Activated B cell treated with CpG ODN at 0.5 μM for 24 hours (primary cell): ENCODE measurements at regions of chr1 and their contacts with region 1.

Region 1: DNA sequence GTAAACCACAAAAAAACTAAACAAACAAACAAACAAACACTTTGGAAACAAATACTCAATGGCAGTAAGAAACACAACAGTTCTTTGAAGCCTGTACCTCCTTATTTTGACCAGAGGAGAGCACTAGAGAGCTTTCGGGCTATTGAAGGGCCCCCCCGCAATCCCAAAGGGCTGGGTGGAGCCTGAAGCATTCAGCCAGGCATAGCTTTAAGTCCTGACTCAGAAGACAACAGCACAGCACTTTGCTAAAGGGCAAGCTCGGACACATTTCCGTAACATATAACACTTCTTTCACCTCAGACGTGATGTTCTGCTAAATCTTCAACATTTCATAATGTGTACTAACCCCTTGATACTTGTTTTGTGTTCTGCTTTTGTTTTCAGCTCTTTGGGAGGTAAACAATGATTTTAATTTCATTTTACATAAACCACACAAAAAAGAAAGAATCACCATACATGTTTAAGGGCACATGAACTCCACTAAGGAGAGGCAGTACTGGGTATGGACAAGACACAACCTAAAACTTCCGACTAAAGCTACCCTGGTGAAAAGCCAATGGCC is 9.7 kb upstream of the SHCBP1L start:
- DNase-seq: no peak
- ATAC-seq: peak; percentile 100
- H3K4me3 Mint-ChIP-seq: peak overlapping the region; percentile 67
- H3K27ac Mint-ChIP-seq: peak overlapping the region; percentile 76
- H3K4me1 Mint-ChIP-seq: peaks cover 8% of the 10 kb centered on the region
- H3K27me3 Mint-ChIP-seq: peaks cover 2% of the 10 kb centered on the region
- CTCF ChIP-seq: no peak

Region 2: DNA sequence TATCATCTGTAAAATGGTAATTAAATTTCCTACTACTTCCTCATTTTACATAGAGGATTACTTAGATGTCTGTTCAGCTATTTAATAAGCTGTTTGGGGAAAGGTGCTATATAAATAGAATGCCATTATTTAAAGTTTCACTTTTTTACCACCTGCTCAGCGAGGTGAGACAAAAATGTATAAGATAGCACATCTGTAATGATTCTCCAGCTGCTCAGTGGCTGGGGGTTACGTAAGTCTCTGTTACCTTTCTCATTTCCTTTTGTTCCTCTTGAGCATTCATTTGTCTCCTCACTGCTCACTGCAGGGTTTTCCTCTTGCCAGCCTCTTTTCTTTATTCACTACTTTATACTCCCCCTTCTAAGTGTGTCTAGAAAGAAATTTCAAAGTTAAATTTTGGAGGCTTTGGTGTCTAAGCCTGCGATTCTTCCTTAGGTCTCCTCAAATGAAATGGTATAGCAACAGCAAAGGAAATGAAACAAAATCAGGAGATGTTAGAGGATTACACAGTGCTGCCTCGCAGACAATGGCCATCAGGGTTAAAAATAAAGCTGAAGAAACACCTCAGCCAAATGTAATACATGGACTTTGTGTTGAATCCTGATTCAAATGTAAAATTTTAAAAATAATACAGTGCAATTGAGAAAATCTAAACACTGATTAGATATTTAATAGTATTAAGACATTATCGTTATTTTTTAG is 285.1 kb before region 1 on chr1:
- CTCF ChIA-PET with region 1: no interaction called
- POLR2A ChIA-PET with region 1: no interaction called
- intact Hi-C with region 1: no loop called
- DNase-seq: no peak
- ATAC-seq: peak; percentile 72
- H3K4me3 Mint-ChIP-seq: peak overlapping the region; percentile 47
- H3K27ac Mint-ChIP-seq: no peak overlapping the region
- H3K4me1 Mint-ChIP-seq: peaks cover 27% of the 10 kb centered on the region
- H3K27me3 Mint-ChIP-seq: peaks cover 7% of the 10 kb centered on the region
- CTCF ChIP-seq: no peak

Region 3: GRCh38 chr1:183101841-183102276 is 139.2 kb after region 1 on chr1:
- CTCF ChIA-PET with region 1: interaction called, 3 read pairs
- POLR2A ChIA-PET with region 1: no interaction called
- intact Hi-C with region 1: loop called (anchors 1 kb)
- DNase-seq: peak; percentile 20
- ATAC-seq: peak; percentile 58
- H3K4me3 Mint-ChIP-seq: no peak overlapping the region
- H3K27ac Mint-ChIP-seq: peak overlapping the region; percentile 50
- H3K4me1 Mint-ChIP-seq: peaks cover 14% of the 10 kb centered on the region
- H3K27me3 Mint-ChIP-seq: no peaks in the 10 kb centered on the region
- CTCF ChIP-seq: no peak

Region 4: DNA sequence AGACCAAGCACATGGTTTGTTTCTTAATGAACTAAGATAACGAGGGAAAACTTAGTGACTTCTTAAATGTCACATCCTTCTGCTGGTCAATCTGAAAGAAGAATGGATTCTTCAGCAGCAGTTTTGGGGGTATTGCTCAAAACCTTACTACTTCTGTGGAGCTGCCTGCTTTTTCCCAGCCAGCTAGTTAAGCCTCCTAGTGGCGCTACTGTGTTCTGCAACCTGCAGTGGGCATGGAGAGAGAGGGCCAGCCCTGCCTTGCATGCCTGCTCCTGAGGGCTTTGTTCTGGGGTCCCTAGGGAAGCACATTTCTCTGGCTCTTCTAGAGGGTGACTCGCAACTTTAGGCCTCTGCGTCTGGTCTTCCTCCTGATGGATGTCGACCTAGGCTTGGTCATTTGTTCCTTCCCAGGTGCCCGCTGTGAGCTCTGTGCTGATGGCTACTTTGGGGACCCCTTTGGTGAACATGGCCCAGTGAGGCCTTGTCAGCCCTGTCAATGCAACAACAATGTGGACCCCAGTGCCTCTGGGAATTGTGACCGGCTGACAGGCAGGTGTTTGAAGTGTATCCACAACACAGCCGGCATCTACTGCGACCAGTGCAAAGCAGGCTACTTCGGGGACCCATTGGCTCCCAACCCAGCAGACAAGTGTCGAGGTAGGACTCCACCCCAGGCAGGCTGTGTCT is 265.5 kb after region 1 on chr1:
- CTCF ChIA-PET with region 1: interaction called, 59 read pairs
- POLR2A ChIA-PET with region 1: interaction called, 6 read pairs
- intact Hi-C with region 1: loop called (anchors 1 kb)
- DNase-seq: peak; percentile 20
- ATAC-seq: peak; percentile 75
- H3K4me3 Mint-ChIP-seq: no peak overlapping the region
- H3K27ac Mint-ChIP-seq: no peak overlapping the region
- H3K4me1 Mint-ChIP-seq: peaks cover 5% of the 10 kb centered on the region
- H3K27me3 Mint-ChIP-seq: peaks cover under 1% of the 10 kb centered on the region
- CTCF ChIP-seq: no peak

Region 5: GRCh38 chr1:183543619-183544204 is 581.1 kb after region 1 on chr1:
- CTCF ChIA-PET with region 1: no interaction called
- POLR2A ChIA-PET with region 1: no interaction called
- intact Hi-C with region 1: loop called (anchors 10 kb)
- DNase-seq: no peak
- ATAC-seq: peak; percentile 71
- H3K4me3 Mint-ChIP-seq: no peak overlapping the region
- H3K27ac Mint-ChIP-seq: no peak overlapping the region
- H3K4me1 Mint-ChIP-seq: peaks cover 30% of the 10 kb centered on the region
- H3K27me3 Mint-ChIP-seq: no peaks in the 10 kb centered on the region
- CTCF ChIP-seq: no peak

Region 6: DNA sequence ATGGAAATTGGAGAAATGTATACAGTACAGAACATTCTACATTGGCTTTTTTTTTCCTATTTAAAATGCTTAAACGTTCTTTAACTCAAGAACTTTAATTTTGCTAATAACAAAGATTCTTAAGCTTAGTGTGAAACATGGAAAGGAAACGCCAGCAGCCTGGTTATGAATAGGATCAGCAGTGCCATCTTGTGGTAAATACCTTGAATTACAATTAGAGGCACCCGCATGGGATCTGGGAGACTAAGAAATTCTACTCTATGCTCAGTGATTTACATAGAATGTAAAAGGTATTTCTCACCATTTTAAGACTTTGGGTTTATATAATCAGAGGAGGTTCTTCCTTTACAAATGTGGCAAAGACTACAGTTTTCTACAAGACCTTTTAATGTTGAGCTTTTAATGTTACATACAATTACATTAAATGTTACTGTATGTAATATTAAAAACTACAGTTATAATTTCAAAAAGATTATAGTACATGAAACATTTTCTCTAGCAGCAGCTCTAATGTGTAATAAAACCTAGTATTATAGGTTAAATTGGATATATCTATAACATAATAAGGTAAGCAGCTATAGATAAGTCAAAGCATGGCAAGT is 722.6 kb after region 1 on chr1:
- CTCF ChIA-PET with region 1: interaction called, 5 read pairs
- POLR2A ChIA-PET with region 1: no interaction called
- intact Hi-C with region 1: loop called (anchors 1 kb)
- DNase-seq: no peak
- ATAC-seq: peak; percentile 61
- H3K4me3 Mint-ChIP-seq: no peak overlapping the region
- H3K27ac Mint-ChIP-seq: no peak overlapping the region
- H3K4me1 Mint-ChIP-seq: peaks cover 8% of the 10 kb centered on the region
- H3K27me3 Mint-ChIP-seq: peaks cover 25% of the 10 kb centered on the region
- CTCF ChIP-seq: no peak

Region 7: GRCh38 chr1:183968386-183968785 is 1005.8 kb after region 1 on chr1:
- CTCF ChIA-PET with region 1: no interaction called
- POLR2A ChIA-PET with region 1: no interaction called
- intact Hi-C with region 1: no loop called
- DNase-seq: no peak
- ATAC-seq: no peak
- H3K4me3 Mint-ChIP-seq: no peak overlapping the region
- H3K27ac Mint-ChIP-seq: no peak overlapping the region
- H3K4me1 Mint-ChIP-seq: no peaks in the 10 kb centered on the region
- H3K27me3 Mint-ChIP-seq: peaks cover 25% of the 10 kb centered on the region
- CTCF ChIP-seq: no peak